BJ (cell line): ENCODE measurements at regions of chr4 and their contacts with region 1.

Region 1: GRCh38 chr4:48095441-48095840 is 38.6 kb downstream of the TXK start:
- DNase-seq: no peak
- H3K4me3 ChIP-seq: no peak overlapping the region
- H3K27me3 ChIP-seq: no peaks in the 10 kb centered on the region
- CTCF ChIP-seq: no peak

Region 2: GRCh38 chr4:47612116-47613023 is 483.1 kb before region 1 on chr4:
- CTCF ChIA-PET with region 1: no interaction called
- POLR2A ChIA-PET with region 1: no interaction called
- DNase-seq: no peak
- H3K4me3 ChIP-seq: no peak overlapping the region
- H3K27me3 ChIP-seq: no peaks in the 10 kb centered on the region
- CTCF ChIP-seq: no peak

Region 3: DNA sequence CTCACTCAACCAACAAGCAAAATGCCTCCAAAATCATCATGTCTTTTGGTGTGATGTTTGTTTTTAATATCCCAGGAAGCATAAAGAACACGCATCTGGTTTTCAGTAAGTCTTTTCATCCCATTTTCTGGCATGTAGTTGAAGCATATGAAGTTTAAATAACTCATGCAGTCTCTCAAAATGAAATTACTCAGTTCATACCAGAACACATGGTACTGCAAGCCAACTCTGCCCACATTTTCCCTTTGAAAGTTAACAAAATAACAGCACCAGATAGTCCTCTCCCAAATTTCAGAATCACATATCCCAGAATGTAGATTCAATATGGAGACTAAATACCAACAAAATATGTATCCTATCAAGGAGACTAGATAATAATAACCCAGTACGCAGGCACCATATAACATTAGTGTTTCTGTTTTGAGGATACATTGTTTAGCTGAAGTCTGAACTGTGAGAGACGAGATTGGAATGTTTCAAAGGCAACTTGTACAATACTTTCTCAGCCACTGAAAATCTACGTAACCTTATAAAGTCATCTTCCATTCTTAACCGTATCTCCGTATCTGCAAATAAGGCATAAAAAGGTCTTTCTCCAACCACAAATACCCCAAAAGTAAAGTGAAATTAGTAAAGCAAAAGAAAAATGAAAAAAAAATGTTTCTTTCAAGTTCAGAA is 280.7 kb before region 1 on chr4:
- CTCF ChIA-PET with region 1: no interaction called
- POLR2A ChIA-PET with region 1: no interaction called
- DNase-seq: no peak
- H3K4me3 ChIP-seq: no peak overlapping the region
- H3K27me3 ChIP-seq: peaks cover 1% of the 10 kb centered on the region
- CTCF ChIP-seq: no peak

Region 4: GRCh38 chr4:48002267-48002666 is 93.2 kb before region 1 on chr4:
- CTCF ChIA-PET with region 1: interaction called, 13 read pairs
- POLR2A ChIA-PET with region 1: no interaction called
- DNase-seq: no peak
- H3K4me3 ChIP-seq: no peak overlapping the region
- H3K27me3 ChIP-seq: no peaks in the 10 kb centered on the region
- CTCF ChIP-seq: no peak